ENCODE measurements at regions of chr5 and their contacts with region 1.

Region 1: DNA sequence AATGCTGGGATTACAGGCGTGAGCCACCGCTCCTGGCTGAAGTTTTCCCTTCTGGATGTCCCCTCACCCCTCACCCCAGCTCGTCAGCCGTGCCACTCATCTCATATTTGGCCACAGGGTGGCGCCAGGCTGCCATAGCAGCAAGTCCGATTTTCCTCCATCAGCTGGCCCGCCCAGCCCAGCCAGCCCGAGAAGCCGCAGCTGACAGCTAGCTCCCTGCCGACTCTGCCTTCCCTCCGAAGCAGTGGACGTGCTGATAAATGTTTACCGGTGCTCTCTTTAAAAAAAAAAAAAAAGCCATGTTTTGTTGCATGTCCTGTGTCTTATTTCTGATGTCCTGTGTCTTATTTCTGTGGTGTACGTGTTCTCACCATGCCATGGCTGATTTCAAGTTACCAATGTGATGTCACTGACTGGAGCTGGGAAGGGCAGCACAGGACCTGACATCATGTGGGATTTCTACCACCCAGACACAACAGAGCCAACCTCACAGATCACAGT is 58.3 kb downstream of the PFDN1 start:
- DNase-seq: peak; percentile 79
- H3K4me3 ChIP-seq: no peak overlapping the region
- H3K27ac ChIP-seq: peak overlapping the region; percentile 52
- H3K27me3 ChIP-seq: no peaks in the 10 kb centered on the region
- CTCF ChIP-seq: peak; percentile 90

Region 2: GRCh38 chr5:140261403-140262171 is 17.0 kb after region 1 on chr5:
- CTCF ChIA-PET with region 1: interaction called, 50 read pairs
- POLR2A ChIA-PET with region 1: no interaction called
- DNase-seq: peak; percentile 72
- H3K4me3 ChIP-seq: 0 out of 2 replicates have a peak overlapping the region, but pooled peaks have one; percentile 5
- H3K27ac ChIP-seq: no peak overlapping the region
- H3K27me3 ChIP-seq: no peaks in the 10 kb centered on the region
- CTCF ChIP-seq: peak; percentile 19; the same call in 1 of the 2 replicates

Region 3: GRCh38 chr5:140312067-140312790 is 67.7 kb after region 1 on chr5:
- CTCF ChIA-PET with region 1: interaction called, 10 read pairs
- POLR2A ChIA-PET with region 1: no interaction called
- DNase-seq: peak; percentile 90
- H3K4me3 ChIP-seq: no peak overlapping the region
- H3K27ac ChIP-seq: peak overlapping the region; percentile 90
- H3K27me3 ChIP-seq: no peaks in the 10 kb centered on the region
- CTCF ChIP-seq: no peak

Region 4: DNA sequence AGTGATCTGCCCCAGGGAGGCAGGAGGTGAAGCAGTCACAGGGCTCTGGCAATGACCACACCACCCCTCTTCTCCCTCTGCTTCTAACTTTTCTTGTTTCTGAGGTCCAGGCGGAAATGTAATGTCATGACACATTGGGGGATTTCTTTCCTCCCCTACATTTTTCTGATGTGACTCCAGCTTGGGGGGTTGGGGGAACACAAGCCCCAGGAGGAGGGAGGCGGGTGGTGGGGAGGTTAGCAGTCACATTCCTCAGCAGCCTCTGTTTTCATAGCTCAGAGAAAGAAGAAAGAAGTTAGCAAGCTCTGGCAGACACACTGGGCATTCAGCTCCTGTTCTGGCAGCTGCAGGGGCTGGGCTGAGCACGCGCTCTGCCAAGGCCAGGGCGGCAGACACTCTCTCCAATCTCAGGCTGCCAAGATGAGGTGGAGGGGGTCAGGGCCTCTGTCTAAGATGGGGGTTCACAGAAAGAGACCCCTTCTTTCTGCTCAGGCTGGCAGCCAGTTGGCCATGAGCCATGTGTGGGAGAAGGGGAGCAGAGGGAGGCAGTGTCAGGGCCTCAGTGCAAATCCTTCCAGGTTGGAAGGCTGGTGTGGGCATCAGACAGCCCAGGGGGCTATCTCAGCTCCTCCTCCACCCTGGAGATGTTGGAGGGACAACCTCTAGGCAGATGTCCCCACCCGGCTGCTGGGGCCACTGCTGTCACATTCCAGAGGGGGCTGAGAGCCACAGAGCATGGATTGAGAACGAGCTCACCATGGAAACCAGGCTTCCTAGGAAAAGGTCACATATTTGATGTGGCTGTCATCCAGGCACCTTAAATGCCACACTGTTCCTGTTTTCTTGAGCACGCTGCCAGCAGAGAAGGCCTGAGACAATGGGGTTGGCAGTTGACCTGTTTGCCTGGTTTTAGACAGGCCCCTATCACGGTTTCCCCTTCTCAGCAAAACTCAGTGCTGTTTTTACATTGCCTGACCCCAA is 78.5 kb after region 1 on chr5:
- CTCF ChIA-PET with region 1: interaction called, 11 read pairs
- POLR2A ChIA-PET with region 1: interaction called, 3 read pairs
- DNase-seq: peak; percentile 88
- H3K4me3 ChIP-seq: peak overlapping the region; percentile 7; the same call in 1 of the 2 replicates
- H3K27ac ChIP-seq: peak overlapping the region; percentile 89
- H3K27me3 ChIP-seq: no peaks in the 10 kb centered on the region
- CTCF ChIP-seq: no peak

Region 5: DNA sequence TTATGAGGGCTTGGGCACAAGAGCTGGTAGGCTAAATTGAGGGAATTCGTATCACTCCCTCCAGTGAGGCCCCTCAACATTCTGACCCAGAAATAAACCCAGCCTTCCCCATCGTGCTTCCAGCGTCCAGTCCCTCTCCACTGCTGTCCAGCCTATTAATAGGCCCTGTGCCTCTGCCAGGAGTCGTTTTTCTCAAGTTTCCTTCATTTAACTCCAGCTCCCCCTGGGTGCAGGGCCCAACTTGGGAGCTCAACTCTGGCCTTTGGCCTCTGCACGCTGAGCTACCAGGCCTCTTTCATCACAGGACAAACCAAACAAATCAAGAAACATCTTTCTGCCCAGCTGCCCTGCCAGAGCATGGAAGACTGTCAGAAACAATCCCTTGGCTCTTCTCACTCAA is 91.8 kb after region 1 on chr5:
- CTCF ChIA-PET with region 1: interaction called, 806 read pairs
- POLR2A ChIA-PET with region 1: interaction called, 3 read pairs
- DNase-seq: no peak
- H3K4me3 ChIP-seq: no peak overlapping the region
- H3K27ac ChIP-seq: no peak overlapping the region
- H3K27me3 ChIP-seq: no peaks in the 10 kb centered on the region
- CTCF ChIP-seq: no peak

Region 6: DNA sequence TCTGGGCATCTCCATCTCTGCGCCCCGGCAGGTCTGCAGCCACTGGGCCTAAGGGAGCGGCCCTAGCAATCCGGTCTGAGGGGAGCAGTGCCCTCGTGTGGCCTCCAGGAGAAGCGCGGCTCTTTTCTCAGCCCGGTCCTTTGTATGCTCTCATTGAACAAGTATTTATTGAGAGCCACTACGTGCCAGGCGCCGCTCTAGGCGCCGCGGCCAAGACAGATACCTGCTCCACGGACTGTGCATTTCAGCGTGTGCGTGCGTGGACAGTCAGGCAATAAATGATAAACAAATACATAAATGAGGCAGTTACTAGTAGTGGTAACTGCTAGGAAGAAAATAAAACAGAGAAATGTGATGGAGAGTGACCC is 113.1 kb after region 1 on chr5:
- CTCF ChIA-PET with region 1: interaction called, 806 read pairs
- POLR2A ChIA-PET with region 1: interaction called, 4 read pairs
- DNase-seq: peak; percentile 76
- H3K4me3 ChIP-seq: peak overlapping the region; percentile 27
- H3K27ac ChIP-seq: no peak overlapping the region
- H3K27me3 ChIP-seq: no peaks in the 10 kb centered on the region
- CTCF ChIP-seq: peak; percentile 91

Region 7: GRCh38 chr5:140372971-140373487 is 128.5 kb after region 1 on chr5:
- CTCF ChIA-PET with region 1: interaction called, 22 read pairs
- POLR2A ChIA-PET with region 1: no interaction called
- DNase-seq: peak; percentile 44
- H3K4me3 ChIP-seq: no peak overlapping the region
- H3K27ac ChIP-seq: no peak overlapping the region
- H3K27me3 ChIP-seq: peaks cover 6% of the 10 kb centered on the region
- CTCF ChIP-seq: peak; percentile 91

Measured in AG04450 (cell line).